ENCODE measurements at regions of chr18 and their contacts with region 1.

Region 1: DNA sequence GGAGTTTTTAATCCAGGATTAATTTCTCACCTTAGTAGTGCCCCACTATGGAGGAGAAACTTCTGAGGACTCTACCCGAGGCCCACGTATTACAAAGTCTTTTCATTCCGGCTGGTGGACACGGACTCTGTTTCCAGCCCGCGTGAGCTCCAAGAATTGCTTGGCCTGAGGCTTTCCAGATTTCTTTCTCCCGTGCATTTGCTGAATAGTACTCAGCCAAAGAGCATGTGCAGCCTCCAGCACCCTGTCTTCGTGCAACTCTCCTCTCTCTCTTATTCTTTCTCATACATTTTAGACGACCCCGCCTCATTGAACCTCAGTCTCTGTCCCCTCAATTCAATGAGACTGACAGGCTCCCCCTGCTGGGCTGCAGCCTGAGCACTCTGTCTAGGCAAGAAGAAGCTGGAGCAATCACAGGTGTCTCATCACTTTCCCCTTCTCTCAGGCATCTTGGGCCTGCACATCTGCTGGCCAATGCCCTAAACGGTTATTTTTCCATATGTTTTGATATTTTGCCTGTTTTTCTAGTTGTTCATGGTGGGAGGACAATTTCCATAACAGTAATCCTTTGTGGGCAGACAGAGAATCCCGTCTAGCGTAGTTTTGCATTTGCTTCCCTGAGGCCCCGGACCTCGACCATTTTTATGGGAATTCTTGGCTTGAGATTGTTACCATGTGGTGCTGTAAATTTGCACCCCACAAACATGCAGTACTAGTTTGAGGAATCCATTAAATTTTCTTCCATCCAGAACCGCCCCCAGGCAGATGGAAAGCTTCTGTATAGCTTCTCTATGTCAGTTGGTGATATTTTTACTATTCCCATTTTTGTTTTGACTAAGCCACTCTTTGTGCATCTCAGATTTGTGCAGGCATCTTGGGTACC is 50.1 kb upstream of the LPIN2 start:
- DNase-seq: peak; percentile 62
- H3K4me3 Mint-ChIP-seq: peak overlapping the region; percentile 67
- H3K27ac Mint-ChIP-seq: peak overlapping the region; percentile 87
- H3K4me1 Mint-ChIP-seq: peaks cover 63% of the 10 kb centered on the region
- H3K27me3 Mint-ChIP-seq: no peaks in the 10 kb centered on the region

Region 2: GRCh38 chr18:2571200-2572143 is 491.6 kb before region 1 on chr18 and contains the starts of genes METTL4 and NDC80:
- intact Hi-C with region 1: loop called (anchors 10 kb)
- DNase-seq: peak; percentile 82
- H3K4me3 Mint-ChIP-seq: peak within 1 kb of the TSS; percentile 99
- H3K27ac Mint-ChIP-seq: peak within 1 kb of the TSS; percentile 98
- H3K4me1 Mint-ChIP-seq: peaks cover 52% of the 10 kb centered on the region
- H3K27me3 Mint-ChIP-seq: no peaks in the 10 kb centered on the region
- total RNA-seq, gene METTL4: 17.8 and 18.3 TPM in 2 replicates
- total RNA-seq, gene NDC80: 41.5 and 43.0 TPM in 2 replicates

Region 3: GRCh38 chr18:2932247-2933181 is 130.5 kb before region 1 on chr18:
- intact Hi-C with region 1: loop called (anchors 1 kb)
- DNase-seq: no peak
- H3K4me3 Mint-ChIP-seq: peak overlapping the region; percentile 43
- H3K27ac Mint-ChIP-seq: peak overlapping the region; percentile 89
- H3K4me1 Mint-ChIP-seq: peaks cover 32% of the 10 kb centered on the region
- H3K27me3 Mint-ChIP-seq: no peaks in the 10 kb centered on the region

Region 4: GRCh38 chr18:2978646-2979045 is 84.4 kb before region 1 on chr18:
- intact Hi-C with region 1: loop called (anchors 1 kb)
- DNase-seq: no peak
- H3K4me3 Mint-ChIP-seq: peak overlapping the region; percentile 75
- H3K27ac Mint-ChIP-seq: peak overlapping the region; percentile 91
- H3K4me1 Mint-ChIP-seq: peaks cover 74% of the 10 kb centered on the region
- H3K27me3 Mint-ChIP-seq: no peaks in the 10 kb centered on the region

Region 5: DNA sequence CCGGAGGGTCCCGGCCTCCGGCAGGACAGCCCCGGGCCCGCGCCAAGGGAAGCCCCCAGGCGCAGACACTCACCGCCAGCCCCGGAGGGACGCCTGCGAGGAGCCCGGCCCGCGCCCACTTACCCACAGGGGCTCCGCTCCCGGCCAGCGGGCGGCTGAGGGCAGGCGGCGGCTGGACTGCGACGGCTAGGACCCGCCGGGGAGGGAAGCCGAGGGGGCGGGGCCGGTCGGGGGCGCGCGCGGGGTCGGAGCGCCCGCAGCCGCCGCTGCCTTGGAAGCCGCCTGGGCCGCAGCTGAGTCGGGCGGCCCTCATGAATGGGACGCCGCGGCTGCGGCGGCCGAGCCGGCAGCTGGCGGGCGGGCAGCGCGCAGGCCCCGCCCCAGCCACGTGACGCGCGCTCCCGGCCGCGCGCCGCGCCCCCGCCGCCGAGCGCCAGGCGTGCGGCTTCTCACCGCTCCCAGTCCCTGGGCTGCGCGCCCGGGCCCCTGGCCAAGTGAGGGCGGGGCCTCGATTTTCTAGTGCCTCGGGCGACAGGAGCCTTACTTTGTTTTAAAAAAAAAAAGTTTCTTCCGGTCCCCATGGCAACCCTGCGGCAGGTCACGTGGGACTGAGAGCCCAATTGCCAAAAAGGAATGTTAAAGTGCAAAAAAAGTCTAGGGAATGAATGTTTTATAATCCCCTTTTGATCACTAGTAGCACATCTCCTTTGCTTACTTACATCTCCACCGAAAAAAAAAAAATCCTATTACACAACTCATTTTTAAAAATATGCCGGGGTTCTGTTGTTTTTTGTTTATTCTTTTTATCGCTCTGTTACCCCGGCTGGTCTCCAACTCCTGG is 49.9 kb before region 1 on chr18 and contains the start of gene LPIN2:
- intact Hi-C with region 1: loop called (anchors 1 kb)
- DNase-seq: peak; percentile 96
- H3K4me3 Mint-ChIP-seq: peak within 1 kb of the TSS; percentile 97
- H3K27ac Mint-ChIP-seq: peak within 1 kb of the TSS; percentile 92
- H3K4me1 Mint-ChIP-seq: peaks cover 58% of the 10 kb centered on the region
- H3K27me3 Mint-ChIP-seq: no peaks in the 10 kb centered on the region
- total RNA-seq, gene LPIN2: 87.9 and 95.9 TPM in 2 replicates

Region 6: DNA sequence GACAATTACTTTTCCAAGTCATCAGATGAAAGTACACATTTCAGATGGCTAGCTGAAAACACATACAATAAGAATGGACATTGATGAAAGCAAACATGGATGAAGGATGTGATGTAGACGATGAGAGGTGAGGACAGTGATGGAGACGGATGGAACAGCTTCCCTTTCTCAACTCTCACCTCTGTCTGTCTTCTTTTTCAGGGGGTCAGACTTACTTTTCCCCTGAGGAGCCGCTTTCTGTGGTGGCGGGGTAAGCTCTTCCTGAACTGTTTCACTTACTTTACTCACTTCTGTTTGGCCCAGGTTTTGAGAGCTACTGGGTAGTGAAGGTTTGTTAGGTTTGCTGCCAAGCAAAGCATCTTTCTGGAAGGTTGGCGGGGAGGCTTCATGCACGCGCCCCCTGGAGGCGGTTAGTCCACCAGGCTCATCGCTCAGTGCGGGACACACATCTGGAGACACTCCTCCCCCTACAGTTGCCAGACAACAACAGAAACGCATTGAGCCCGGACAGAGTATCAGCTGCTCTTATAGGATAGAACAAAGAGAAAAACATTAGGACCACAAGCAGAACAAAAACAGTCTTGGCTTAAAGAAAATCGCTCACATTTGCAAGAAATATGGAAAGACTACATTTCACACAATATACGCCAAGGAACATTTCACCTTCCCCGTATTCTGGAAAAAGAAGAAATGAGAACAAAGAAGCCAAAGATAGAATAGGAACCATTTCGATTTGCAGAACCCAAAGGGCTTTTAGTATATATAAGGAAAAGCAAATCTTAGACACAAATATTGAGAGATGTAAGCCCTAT is 66.2 kb after region 1 on chr18:
- intact Hi-C with region 1: loop called (anchors 5 kb)
- DNase-seq: peak; percentile 72
- H3K4me3 Mint-ChIP-seq: no peak overlapping the region
- H3K27ac Mint-ChIP-seq: no peak overlapping the region
- H3K4me1 Mint-ChIP-seq: peaks cover 6% of the 10 kb centered on the region
- H3K27me3 Mint-ChIP-seq: no peaks in the 10 kb centered on the region